Mammary epithelial cell (primary cell): ENCODE measurements at regions of chr1 and their contacts with region 1.

Region 1: DNA sequence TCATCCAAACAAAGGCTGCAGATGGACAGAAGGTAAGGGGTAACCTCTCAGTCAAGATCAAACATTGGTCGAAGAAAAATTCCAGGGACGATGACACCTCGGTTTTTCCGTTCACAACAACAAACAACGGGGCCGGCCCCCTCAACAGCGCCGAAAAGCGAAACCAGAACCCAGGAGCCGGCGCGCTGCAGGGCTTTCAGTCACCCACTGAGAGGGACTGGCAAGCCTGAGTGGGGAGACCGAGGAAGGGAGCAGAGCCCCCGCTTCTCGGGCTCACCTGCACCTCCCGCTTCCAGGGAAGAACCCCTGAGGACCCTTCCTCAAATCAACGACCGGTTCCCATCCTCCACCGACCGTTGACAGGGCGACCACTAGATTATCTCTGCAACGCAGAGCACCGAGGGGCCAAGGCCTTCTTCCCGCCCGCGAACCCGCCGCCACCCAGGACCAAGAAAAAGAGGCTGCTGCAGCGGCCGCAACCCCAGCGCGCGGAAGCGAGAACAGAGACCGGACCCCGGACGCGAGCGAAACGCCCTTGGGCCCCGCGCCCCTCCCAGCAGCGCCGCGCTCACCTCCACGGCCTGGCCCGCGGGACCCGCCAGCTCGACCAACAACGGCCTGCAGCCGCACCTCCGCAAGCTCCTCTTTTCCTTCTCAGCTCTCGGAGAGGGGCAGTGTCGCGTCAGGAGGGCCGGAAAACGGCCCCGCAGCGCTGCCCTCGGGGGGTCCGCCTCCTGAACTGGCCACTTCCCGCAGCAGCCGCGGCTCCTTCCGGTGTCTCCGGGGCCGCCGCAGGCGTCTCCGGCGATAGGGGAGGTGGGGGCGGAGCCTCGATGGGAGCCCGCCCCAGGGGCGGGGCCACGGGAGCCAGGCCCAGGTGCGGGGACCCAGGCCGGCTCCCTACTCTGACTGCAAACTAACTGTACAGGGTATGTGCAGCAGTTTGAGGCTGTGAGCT is at the start of gene USP33:
- DNase-seq: peak; percentile 76
- H3K4me3 ChIP-seq: peak within 1 kb of the TSS; percentile 65 to 93 (median 87)
- H3K27ac ChIP-seq: peak within 1 kb of the TSS; percentile 72
- H3K4me1 ChIP-seq: peaks cover 10% of the 10 kb centered on the region
- H3K27me3 ChIP-seq: no peaks in the 10 kb centered on the region
- CTCF ChIP-seq: no peak
- total RNA-seq, gene USP33: 41.0 to 55.8 TPM

Region 2: GRCh38 chr1:77271852-77272580 is 487.3 kb before region 1 on chr1:
- CTCF ChIA-PET with region 1: no interaction called
- dilution Hi-C with region 1: no loop called
- in situ Hi-C with region 1: no loop called
- intact Hi-C with region 1: no loop called
- DNase-seq: no peak
- H3K4me3 ChIP-seq: no peak overlapping the region
- H3K27ac ChIP-seq: no peak overlapping the region
- H3K4me1 ChIP-seq: no peaks in the 10 kb centered on the region
- H3K27me3 ChIP-seq: no peaks in the 10 kb centered on the region
- CTCF ChIP-seq: no peak

Region 3: GRCh38 chr1:77683160-77684148 is 75.9 kb before region 1 on chr1:
- CTCF ChIA-PET with region 1: no interaction called
- dilution Hi-C with region 1: no loop called
- in situ Hi-C with region 1: no loop called
- intact Hi-C with region 1: no loop called
- DNase-seq: peak; percentile 93
- H3K4me3 ChIP-seq: peak overlapping the region; percentile 49 to 74 (median 63)
- H3K27ac ChIP-seq: peak overlapping the region; percentile 58
- H3K4me1 ChIP-seq: peaks cover 21% of the 10 kb centered on the region
- H3K27me3 ChIP-seq: no peaks in the 10 kb centered on the region
- CTCF ChIP-seq: peak; percentile 55 to 80

Region 4: DNA sequence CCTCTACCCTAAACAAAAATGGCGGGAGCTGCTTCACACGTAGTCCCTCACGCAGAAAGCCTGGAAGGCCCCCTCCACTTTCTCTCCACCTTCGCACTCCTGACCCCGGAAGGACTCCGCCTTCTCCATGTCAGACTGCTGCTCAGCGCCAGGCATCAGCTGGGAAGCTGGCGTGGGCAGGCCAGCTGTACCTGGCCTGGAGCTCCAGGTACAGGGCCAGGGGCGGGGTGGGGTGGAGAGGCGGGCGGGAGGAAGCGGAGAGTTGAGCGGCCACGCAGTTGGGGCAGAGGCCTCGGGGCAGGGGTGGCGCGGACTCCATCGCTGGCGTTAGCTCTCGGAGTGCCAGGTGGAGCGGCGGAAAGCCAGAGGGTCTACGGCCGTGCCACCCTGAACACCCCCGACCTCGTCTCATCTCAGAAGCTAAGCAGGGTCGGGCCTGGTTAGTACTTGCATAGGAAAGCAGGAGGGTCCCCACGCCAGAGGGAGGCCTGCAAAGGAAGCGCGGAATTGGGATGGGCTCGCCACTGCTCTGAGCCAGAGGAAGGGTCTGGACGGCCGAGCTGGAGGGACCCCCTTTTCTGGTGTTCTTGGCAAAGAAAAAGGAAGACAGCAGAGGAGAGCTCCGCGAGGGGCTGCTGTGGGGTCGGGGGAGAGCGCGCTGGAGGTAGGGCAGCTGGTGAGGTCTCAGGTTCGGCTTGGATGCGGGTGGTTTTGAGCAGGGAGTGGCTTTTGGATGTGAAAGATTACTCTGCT is 20.4 kb after region 1 on chr1 and contains the start of gene MIGA1:
- CTCF ChIA-PET with region 1: interaction called, 5 read pairs
- dilution Hi-C with region 1: no loop called
- in situ Hi-C with region 1: no loop called
- intact Hi-C with region 1: loop called (anchors 2 kb)
- DNase-seq: peak; percentile 93
- H3K4me3 ChIP-seq: peak within 1 kb of the TSS; percentile 78 to 89 (median 83)
- H3K27ac ChIP-seq: peak within 1 kb of the TSS; percentile 35
- H3K4me1 ChIP-seq: no peaks in the 10 kb centered on the region
- H3K27me3 ChIP-seq: no peaks in the 10 kb centered on the region
- CTCF ChIP-seq: no peak
- total RNA-seq, gene MIGA1: 15.2 to 16.6 TPM

Region 5: DNA sequence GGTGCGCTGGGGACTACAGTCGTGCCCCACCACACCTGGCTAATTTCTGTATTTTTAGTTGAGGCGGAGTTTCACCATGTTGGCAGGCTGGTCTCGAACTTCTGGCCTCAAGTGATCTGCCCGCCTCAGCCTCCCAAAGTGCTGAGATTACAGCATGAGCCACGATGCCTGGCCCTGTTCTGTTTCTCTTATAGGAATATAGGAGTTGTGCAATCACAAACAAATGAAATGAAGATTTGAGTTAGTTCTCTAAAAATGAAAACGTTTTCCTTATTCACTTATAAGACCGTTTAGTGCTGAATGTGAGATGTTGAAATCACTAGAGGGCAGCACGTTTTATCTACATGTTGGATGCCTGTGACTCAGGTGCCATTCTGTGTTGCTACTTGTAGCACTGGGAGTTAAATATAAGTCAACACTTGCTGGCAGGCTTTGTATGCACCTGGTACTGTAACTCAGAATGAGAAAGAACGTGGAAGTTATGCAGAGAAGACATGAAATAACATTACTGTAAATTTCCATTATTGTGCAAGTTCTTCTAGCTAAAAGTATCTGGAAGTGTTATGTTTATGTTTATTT is 65.9 kb after region 1 on chr1:
- CTCF ChIA-PET with region 1: no interaction called
- dilution Hi-C with region 1: no loop called
- in situ Hi-C with region 1: no loop called
- intact Hi-C with region 1: loop called (anchors 5 kb)
- DNase-seq: peak; percentile 95
- H3K4me3 ChIP-seq: no peak overlapping the region
- H3K27ac ChIP-seq: peak overlapping the region; percentile 69
- H3K4me1 ChIP-seq: peaks cover 18% of the 10 kb centered on the region
- H3K27me3 ChIP-seq: no peaks in the 10 kb centered on the region
- CTCF ChIP-seq: peak; percentile 8 to 47

Region 6: DNA sequence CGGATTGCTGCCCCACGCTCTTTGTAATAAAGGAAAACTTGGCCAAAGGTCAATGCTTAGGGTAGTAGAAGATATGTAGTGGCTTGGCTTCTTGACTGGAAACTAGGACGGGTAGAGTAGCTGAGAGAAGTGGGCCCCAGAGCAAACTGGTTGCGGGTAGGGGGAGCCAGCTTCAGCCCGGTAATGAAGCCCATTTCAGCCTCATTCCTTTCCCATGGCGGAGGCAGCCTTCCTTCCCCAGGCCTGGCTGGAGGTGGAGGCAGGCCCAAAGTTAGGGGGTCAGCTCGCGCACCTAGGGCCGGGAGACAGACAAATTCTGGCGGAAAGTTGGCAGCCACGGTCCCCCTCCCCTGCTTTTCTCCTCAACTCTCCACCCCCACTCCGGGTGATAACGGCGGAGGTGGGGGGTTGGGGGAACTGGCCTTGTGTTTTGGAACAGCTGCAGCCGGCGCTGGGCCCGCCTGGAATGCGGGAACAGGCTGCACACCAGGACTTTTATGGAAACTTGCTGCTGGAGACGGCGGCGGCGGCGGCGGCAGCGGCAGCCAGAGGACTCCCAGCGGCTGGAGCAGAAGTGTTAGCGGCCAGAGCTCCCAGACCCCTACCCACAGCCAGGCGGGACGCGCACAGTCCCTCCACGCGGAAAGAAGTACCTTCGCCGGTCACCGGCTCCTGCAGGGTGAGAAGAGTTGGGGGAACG is 128.9 kb after region 1 on chr1 and contains the start of gene NEXN:
- CTCF ChIA-PET with region 1: no interaction called
- dilution Hi-C with region 1: no loop called
- in situ Hi-C with region 1: no loop called
- intact Hi-C with region 1: loop called (anchors 5 kb)
- DNase-seq: peak; percentile 52
- H3K4me3 ChIP-seq: peak within 1 kb of the TSS; percentile 81 to 88 (median 84)
- H3K27ac ChIP-seq: peak within 1 kb of the TSS; percentile 86
- H3K4me1 ChIP-seq: peaks cover 9% of the 10 kb centered on the region
- H3K27me3 ChIP-seq: no peaks in the 10 kb centered on the region
- CTCF ChIP-seq: peak in 1 of 2 donors; percentile 2
- total RNA-seq, gene NEXN: 6.3 to 8.2 TPM

Region 7: DNA sequence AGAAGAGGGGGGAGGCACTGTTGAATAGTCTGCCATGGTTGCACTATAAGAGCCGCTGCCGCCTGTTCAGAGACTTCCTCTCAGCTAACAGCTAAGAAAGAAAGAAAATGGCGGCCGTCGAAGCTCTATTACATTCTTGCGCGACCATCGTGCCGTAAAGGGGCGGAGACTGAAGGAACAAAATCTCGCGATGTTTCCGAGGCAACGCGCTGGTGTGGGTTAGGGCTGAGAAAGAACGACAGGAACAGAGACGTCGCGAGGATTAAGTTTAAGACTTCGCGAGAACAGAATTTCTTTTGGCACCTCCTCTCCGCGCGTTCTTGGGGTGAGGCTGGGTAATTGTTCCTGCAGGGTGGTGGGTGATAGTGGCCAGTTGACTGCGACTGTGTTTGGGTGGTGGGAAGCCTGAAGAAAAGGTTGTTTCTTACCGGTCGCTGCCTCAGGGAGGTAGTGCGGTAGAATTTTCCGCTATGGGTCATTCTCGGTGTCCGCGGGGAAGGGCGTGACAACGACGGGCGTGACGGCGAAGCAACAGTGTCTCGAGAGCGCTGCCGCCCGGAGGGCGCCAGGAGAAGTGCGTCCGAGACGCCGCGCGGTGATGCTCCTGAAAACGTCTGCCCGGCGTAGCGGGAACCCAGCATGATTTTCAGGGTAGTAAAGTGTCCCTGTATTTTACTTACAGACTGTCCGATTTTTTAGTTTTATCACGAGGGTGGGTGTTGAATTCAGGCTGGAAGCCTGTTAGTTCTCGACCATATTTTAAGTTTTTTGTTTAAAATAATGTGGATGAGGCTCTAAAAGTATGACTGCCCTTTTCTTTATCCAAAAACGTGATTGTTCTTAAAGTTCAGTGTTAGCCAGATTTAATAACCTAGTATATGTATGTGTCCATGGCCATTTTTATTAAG is 219.9 kb after region 1 on chr1 and contains the start of gene FUBP1:
- CTCF ChIA-PET with region 1: no interaction called
- dilution Hi-C with region 1: no loop called
- in situ Hi-C with region 1: no loop called
- intact Hi-C with region 1: loop called (anchors 5 kb)
- DNase-seq: peak; percentile 98
- H3K4me3 ChIP-seq: peak within 1 kb of the TSS; percentile 57 to 93 (median 75)
- H3K27ac ChIP-seq: peak within 1 kb of the TSS; percentile 99
- H3K4me1 ChIP-seq: peaks cover 31% of the 10 kb centered on the region
- H3K27me3 ChIP-seq: no peaks in the 10 kb centered on the region
- CTCF ChIP-seq: peak; percentile 47 to 75
- total RNA-seq, gene FUBP1: 85.9 to 113 TPM